AG04450 (cell line): ENCODE measurements at regions of chr22 and their contacts with region 1.

Region 1: DNA sequence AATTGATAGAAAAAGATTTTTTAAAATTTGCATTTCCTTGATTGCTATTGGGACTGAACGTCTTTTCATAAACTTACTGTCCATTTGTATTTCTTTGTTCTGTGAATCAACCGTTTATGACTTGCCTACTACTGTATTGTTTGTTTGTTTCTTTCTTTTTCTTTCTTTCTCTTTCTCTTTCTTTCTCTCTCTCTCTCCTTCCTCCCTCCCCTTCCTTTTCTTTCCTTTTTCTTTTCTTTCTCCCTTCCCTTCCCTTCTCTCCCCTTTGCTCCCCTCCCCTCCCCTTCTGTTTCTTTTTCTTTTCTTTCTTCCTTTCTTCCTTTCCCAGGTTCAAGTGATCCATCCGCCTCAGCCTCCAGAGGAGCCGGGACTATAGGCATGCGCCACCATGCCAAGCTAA is 46.9 kb downstream of the NF2 start:
- DNase-seq: no peak
- H3K4me3 ChIP-seq: no peak overlapping the region
- H3K27ac ChIP-seq: no peak overlapping the region
- H3K27me3 ChIP-seq: no peaks in the 10 kb centered on the region
- CTCF ChIP-seq: no peak

Region 2: DNA sequence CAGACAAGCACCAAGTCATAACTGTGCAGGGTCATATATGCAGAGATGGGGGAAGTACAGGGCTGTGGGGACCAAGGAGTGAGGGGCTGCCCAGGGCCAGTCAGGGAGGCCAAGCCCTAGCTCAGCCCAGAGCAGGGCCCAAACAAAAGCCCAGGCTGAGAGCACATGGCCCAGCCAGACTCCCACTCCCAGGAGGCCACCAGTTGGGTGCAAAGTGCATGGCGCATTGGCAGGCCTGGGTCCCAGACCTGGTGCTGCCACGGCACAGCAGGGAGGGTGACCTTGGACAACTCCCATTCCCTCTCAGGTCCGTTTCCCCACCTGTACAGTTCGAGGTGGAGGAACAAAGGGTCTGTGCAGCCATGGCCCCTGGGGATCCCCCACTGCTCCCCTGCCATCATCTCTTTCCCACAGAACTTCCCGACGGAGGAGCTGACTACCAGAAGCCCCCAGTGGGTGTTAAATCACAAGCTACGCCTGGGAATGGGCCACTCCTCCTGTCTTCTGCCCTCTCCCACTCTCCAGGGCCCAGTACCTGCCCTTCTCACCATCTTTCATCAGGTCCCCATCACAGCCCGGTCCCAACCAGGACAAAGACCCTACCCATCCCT is 70.1 kb before region 1 on chr22:
- CTCF ChIA-PET with region 1: no interaction called
- POLR2A ChIA-PET with region 1: no interaction called
- DNase-seq: no peak
- H3K4me3 ChIP-seq: peak overlapping the region; percentile 76
- H3K27ac ChIP-seq: peak overlapping the region; percentile 0
- H3K27me3 ChIP-seq: no peaks in the 10 kb centered on the region
- CTCF ChIP-seq: no peak

Region 3: GRCh38 chr22:29679316-29679715 is 28.9 kb after region 1 on chr22:
- CTCF ChIA-PET with region 1: no interaction called
- POLR2A ChIA-PET with region 1: interaction called, 10 read pairs
- DNase-seq: no peak
- H3K4me3 ChIP-seq: no peak overlapping the region
- H3K27ac ChIP-seq: no peak overlapping the region
- H3K27me3 ChIP-seq: no peaks in the 10 kb centered on the region
- CTCF ChIP-seq: no peak